Calu3 (cell line): ENCODE measurements at regions of chr12 and their contacts with region 1.

Region 1: GRCh38 chr12:93025145-93025805 is 96.2 kb upstream of the EEA1 start:
- DNase-seq: peak; percentile 40
- H3K4me3 Mint-ChIP-seq: no peak overlapping the region
- H3K27ac Mint-ChIP-seq: no peak overlapping the region
- H3K4me1 Mint-ChIP-seq: peaks cover 31% of the 10 kb centered on the region
- H3K27me3 Mint-ChIP-seq: no peaks in the 10 kb centered on the region
- CTCF ChIP-seq: peak; percentile 45

Region 2: DNA sequence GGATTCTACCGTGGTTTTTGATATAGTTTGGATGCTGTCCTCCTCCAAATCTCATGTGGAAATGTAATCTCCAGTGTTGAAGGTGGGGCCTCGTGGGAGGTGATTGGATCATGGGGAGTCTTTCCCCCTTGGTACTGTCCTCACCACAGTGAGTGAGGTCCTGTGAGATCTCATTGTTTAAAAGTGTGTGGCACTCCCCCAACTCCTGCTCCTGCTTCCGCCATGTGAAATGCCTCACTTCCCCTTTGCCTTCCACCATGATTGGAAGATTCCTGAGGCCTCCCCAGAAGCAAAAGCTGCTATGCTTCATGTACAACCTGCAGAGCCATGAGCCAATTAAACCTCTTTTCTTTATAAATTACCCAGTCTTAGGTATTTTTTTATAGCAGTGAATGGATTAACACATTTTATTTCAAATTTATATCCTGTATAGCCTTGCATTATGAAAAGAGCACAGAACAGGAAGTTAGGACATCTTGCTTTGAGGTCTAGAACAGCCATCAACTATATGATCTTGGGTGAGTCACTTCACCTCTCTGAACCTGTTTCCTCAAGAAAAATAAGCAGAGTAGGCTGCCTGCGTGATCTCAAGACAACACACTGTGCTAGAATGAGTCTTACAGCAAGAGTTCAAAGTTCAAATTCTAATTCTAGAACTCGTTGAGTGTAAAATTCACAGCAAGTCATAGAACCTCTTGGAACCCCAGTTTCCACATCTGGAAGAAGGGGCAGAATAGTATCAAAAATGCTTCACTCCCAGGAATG is 64.7 kb after region 1 on chr12:
- CTCF ChIA-PET with region 1: no interaction called
- intact Hi-C with region 1: loop called (anchors 2 kb)
- DNase-seq: peak; percentile 43
- H3K4me3 Mint-ChIP-seq: no peak overlapping the region
- H3K27ac Mint-ChIP-seq: peak overlapping the region; percentile 85
- H3K4me1 Mint-ChIP-seq: peaks cover 64% of the 10 kb centered on the region
- H3K27me3 Mint-ChIP-seq: no peaks in the 10 kb centered on the region
- CTCF ChIP-seq: no peak

Region 3: DNA sequence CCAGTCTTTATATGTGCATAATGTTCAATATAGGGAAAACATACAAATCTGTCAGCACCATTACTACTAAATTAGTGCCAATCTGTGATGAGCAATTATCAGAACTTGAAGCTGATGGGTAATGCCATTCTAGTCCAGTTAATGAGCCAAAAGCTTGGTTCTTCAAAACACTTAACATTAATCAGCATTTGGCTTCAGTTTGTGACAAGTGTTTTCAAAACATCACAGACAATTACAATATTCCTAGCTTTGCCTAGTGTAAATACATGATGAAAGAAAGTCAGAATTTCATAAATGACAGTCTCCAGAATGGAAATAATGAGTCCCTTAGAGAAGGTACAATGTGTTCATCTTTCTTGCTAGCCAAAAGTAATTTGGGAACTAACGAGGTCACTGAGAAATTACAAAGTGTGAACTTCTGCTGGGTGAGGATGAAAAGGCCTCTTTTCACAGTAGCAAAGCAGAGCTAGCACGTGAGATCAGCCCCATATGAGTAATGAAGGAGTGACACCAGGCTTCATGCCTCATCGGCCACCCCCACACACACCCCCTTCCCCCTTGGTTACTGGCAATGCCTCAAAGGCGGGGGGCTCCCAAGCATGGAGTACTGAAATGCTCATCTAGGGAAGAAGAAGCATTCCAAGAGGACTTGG is 84.4 kb after region 1 on chr12:
- CTCF ChIA-PET with region 1: no interaction called
- intact Hi-C with region 1: no loop called
- DNase-seq: no peak
- H3K4me3 Mint-ChIP-seq: no peak overlapping the region
- H3K27ac Mint-ChIP-seq: no peak overlapping the region
- H3K4me1 Mint-ChIP-seq: no peaks in the 10 kb centered on the region
- H3K27me3 Mint-ChIP-seq: no peaks in the 10 kb centered on the region
- CTCF ChIP-seq: no peak

Region 4: DNA sequence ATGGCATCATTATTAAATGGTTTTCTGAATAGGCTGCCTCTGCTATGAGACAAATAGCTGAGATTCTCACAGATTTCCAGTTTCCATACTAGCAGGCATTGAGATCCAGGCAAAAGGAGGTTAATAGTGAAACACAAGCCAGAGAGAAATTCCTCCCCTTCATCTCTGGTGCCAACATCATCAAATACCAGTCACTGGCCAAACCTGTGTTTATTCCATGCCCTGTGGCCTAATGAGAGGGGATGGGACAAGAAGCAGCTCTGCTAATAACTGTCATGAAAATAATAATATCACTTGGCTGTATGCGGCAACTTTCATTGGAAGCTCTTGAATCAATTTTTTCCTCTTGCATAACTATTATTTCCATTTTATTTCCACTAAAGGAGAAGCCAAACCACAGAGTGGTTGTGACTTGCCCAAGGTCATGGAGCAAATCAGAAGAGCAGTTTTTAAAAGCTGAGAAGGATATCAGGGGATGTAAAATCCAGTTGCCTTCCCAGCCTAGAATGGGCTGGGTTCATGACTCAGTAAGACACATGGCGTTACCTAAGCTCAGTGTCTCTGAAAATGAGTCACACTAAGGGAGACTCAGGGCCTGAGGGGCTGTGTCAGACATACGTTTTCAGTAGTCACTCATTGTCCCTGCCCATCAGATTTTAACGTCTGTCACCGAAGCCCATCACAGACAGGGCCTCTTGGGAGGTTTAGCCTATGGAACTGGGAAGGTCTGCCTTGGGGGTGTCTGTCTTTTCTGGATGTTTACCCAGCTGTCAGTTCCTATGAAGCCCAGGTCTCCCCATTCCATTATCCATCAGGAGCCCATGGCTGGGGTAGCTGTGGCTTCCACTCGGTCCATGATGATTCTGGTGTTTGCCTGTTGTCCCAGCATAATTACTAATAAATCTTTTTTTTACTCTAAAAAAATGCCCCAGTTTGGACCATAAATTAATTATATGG is 112.7 kb after region 1 on chr12:
- CTCF ChIA-PET with region 1: no interaction called
- intact Hi-C with region 1: loop called (anchors 2 kb)
- DNase-seq: peak; percentile 25
- H3K4me3 Mint-ChIP-seq: no peak overlapping the region
- H3K27ac Mint-ChIP-seq: no peak overlapping the region
- H3K4me1 Mint-ChIP-seq: peaks cover 47% of the 10 kb centered on the region
- H3K27me3 Mint-ChIP-seq: no peaks in the 10 kb centered on the region
- CTCF ChIP-seq: no peak

Region 5: DNA sequence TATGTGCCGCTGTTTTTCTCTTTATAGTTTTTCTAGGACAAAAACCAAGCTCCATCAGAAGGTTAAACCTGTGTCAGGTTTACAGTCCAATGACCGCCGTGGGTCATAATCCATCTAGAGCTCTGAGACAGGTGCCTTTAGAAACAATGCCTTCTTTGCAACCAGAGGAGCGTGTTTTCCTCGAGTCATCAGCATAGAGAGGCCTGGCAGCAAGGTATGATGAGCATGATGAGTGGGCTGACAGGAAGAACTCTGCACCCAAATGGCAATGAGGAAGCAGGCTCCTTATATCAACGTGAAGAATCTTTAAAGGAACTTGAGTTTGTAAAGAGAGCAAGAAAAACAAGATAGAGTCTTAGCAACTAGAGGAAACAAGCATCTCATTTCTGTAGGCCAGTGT is 292.0 kb after region 1 on chr12:
- CTCF ChIA-PET with region 1: interaction called, 6 read pairs
- intact Hi-C with region 1: loop called (anchors 10 kb)
- DNase-seq: peak; percentile 14
- H3K4me3 Mint-ChIP-seq: no peak overlapping the region
- H3K27ac Mint-ChIP-seq: peak overlapping the region; percentile 50
- H3K4me1 Mint-ChIP-seq: peaks cover 64% of the 10 kb centered on the region
- H3K27me3 Mint-ChIP-seq: no peaks in the 10 kb centered on the region
- CTCF ChIP-seq: no peak

Region 6: GRCh38 chr12:93397412-93397811 is 372.1 kb after region 1 on chr12:
- CTCF ChIA-PET with region 1: no interaction called
- intact Hi-C with region 1: loop called (anchors 2 kb)
- DNase-seq: no peak
- H3K4me3 Mint-ChIP-seq: no peak overlapping the region
- H3K27ac Mint-ChIP-seq: no peak overlapping the region
- H3K4me1 Mint-ChIP-seq: no peaks in the 10 kb centered on the region
- H3K27me3 Mint-ChIP-seq: no peaks in the 10 kb centered on the region
- CTCF ChIP-seq: no peak